Activated CD8-positive, alpha-beta T cell treated with anti-CD3 and anti-CD28 coated beads, Interleukin-2, amount 10 ng/mL, durations not matched to agents 7 days and 5 days (primary cell): ENCODE measurements at regions of chr3 and their contacts with region 1.

Region 1: GRCh38 chr3:36868614-36869436 is 76.0 kb downstream of the TRANK1 start:
- DNase-seq: peak; percentile 70
- ATAC-seq: peak; percentile 88
- H3K4me3 Mint-ChIP-seq: no peak overlapping the region
- H3K27ac Mint-ChIP-seq: no peak overlapping the region
- H3K4me1 Mint-ChIP-seq: peaks cover 9% of the 10 kb centered on the region
- H3K27me3 Mint-ChIP-seq: no peaks in the 10 kb centered on the region

Region 2: GRCh38 chr3:36734742-36735141 is 134.1 kb before region 1 on chr3:
- CTCF ChIA-PET with region 1: interaction called, 13 read pairs
- POLR2A ChIA-PET with region 1: no interaction called
- DNase-seq: no peak
- ATAC-seq: no peak
- H3K4me3 Mint-ChIP-seq: no peak overlapping the region
- H3K27ac Mint-ChIP-seq: no peak overlapping the region
- H3K4me1 Mint-ChIP-seq: no peaks in the 10 kb centered on the region
- H3K27me3 Mint-ChIP-seq: peaks cover 10% of the 10 kb centered on the region

Region 3: GRCh38 chr3:36837089-36837488 is 31.7 kb before region 1 on chr3:
- CTCF ChIA-PET with region 1: interaction called, 12 read pairs
- POLR2A ChIA-PET with region 1: no interaction called
- DNase-seq: no peak
- ATAC-seq: no peak
- H3K4me3 Mint-ChIP-seq: no peak overlapping the region
- H3K27ac Mint-ChIP-seq: peak overlapping the region; percentile 12
- H3K4me1 Mint-ChIP-seq: peaks cover 18% of the 10 kb centered on the region
- H3K27me3 Mint-ChIP-seq: no peaks in the 10 kb centered on the region

Region 4: GRCh38 chr3:36843065-36844051 is 25.5 kb before region 1 on chr3:
- CTCF ChIA-PET with region 1: interaction called, 14 read pairs
- POLR2A ChIA-PET with region 1: no interaction called
- DNase-seq: peak; percentile 71
- ATAC-seq: peak; percentile 73
- H3K4me3 Mint-ChIP-seq: peak overlapping the region; percentile 24
- H3K27ac Mint-ChIP-seq: peak overlapping the region; percentile 78
- H3K4me1 Mint-ChIP-seq: peaks cover 64% of the 10 kb centered on the region
- H3K27me3 Mint-ChIP-seq: no peaks in the 10 kb centered on the region

Region 5: DNA sequence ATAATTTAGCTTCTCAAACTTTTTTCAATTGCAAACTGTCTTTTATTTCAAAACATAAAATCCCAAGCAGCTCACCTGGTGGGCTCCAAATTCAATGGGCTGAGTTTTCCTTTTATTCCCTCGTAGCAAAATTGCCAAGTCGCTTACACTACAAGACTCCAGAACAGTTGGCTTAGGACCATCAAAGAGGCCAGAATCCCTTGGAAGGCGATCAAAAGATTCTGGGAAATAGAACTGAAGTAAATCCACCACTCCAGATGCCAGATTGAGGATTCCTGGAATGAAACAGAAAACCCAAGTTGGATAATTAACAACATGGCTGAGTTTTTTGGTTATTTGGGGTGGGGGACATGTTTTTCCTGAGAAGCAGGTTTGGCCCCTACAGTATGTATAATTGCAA is 16.8 kb before region 1 on chr3:
- CTCF ChIA-PET with region 1: interaction called, 10 read pairs
- POLR2A ChIA-PET with region 1: no interaction called
- DNase-seq: no peak
- ATAC-seq: no peak
- H3K4me3 Mint-ChIP-seq: no peak overlapping the region
- H3K27ac Mint-ChIP-seq: no peak overlapping the region
- H3K4me1 Mint-ChIP-seq: peaks cover 3% of the 10 kb centered on the region
- H3K27me3 Mint-ChIP-seq: no peaks in the 10 kb centered on the region